WTC11 (cell line): ENCODE measurements at regions of chr4 and their contacts with region 1.

Region 1: DNA sequence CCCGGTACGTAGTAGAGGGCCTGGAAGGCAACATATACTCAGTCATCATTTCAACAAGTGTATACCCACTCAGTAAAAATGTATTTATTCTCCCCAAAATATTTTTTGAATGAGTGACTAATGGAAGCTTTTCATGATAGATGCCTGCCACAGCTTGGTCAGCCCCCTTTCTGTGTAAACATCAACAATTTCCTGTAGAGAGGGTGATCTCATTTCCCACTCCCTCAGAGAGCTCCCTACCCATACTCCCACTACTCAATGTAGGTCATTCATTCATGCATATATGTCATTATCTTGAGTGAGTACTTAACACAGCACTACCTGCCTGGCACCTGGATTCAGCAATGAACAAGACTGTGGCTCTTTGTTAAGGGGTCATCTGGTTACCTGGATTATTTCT is 81.9 kb downstream of the STK32B start:
- DNase-seq: no peak
- ATAC-seq: no peak
- H3K4me3 Mint-ChIP-seq: no peak overlapping the region
- H3K27ac Mint-ChIP-seq: no peak overlapping the region
- H3K4me1 Mint-ChIP-seq: peaks cover 28% of the 10 kb centered on the region
- H3K27me3 Mint-ChIP-seq: no peaks in the 10 kb centered on the region; the same call in 1 of the 2 replicates
- CTCF ChIP-seq: no peak

Region 2: DNA sequence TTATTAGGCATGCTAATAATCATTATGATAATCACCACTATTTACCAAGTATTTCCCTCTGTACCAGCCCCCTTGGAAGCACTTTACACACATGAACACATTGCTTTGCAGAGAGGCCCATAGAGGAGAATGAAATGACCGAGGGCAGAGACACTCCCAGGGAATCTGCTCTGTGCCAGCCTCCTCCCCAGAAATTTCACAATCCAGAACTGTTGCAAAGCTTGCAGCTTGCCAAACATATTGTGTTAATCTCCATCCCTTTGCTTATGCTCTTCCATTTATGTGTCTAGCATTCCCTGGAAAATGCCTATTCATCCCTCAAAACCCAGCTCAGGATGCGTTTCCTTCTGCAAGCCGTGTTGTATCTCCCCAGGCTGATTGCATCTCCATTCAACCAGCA is 151.8 kb before region 1 on chr4:
- CTCF ChIA-PET with region 1: no interaction called
- POLR2A ChIA-PET with region 1: no interaction called
- DNase-seq: no peak
- ATAC-seq: no peak
- H3K4me3 Mint-ChIP-seq: no peak overlapping the region
- H3K27ac Mint-ChIP-seq: no peak overlapping the region
- H3K4me1 Mint-ChIP-seq: no peaks in the 10 kb centered on the region
- H3K27me3 Mint-ChIP-seq: peaks cover 16% of the 10 kb centered on the region
- CTCF ChIP-seq: no peak

Region 3: DNA sequence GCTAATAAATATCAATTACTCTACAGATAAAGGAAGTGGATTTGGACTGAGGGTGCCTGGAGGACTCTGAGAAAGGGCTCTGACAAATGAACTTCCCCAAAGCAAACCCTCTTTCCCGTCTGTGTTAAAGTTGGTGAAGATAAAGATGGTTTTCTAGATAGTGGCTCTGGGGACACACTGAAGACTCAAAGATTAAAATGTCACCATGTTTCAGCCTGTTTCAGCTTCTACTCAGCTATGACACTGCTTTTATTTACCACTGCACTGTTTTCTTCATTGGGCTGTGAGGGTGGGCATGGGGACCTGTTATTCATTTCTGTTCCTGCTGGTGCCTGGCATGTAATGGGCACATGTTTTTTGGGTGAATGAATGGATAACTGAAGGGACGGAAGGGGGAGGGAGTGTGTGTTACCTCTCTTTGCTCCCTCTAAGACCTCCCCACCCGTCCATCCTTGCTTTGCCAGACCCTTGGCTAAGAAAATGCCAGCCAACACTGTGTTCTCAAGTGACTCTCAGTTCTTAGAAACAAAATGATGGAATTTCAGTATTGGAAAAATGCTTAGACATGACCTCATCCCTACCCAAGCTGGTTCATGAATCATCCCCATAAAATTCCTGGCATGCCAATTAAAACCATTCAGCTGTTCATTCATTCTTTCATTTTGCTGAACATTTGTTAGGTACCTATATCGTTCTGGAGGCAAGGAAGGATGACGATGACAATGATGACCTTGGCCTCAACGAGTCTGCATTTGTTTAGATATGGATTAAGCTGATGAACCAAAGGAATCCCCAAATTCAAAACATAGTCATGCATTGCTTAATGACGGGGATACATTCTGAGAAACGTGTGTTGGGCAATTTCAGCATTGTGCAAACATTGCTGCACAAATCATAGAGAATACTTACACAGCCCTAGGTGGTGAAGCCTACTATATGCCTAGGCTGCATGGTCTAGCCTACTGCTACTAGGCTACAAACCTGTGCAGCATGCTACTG is 95.3 kb before region 1 on chr4:
- CTCF ChIA-PET with region 1: no interaction called
- POLR2A ChIA-PET with region 1: no interaction called
- DNase-seq: no peak
- ATAC-seq: no peak
- H3K4me3 Mint-ChIP-seq: no peak overlapping the region
- H3K27ac Mint-ChIP-seq: no peak overlapping the region
- H3K4me1 Mint-ChIP-seq: peaks cover 16% of the 10 kb centered on the region
- H3K27me3 Mint-ChIP-seq: peaks cover 5% of the 10 kb centered on the region; the same call in 1 of the 2 replicates
- CTCF ChIP-seq: no peak

Region 4: GRCh38 chr4:5050520-5051277 is 82.5 kb before region 1 on chr4:
- CTCF ChIA-PET with region 1: interaction called, 10 read pairs
- POLR2A ChIA-PET with region 1: no interaction called
- DNase-seq: peak; percentile 81
- ATAC-seq: peak; percentile 79
- H3K4me3 Mint-ChIP-seq: peak overlapping the region; percentile 87
- H3K27ac Mint-ChIP-seq: no peak overlapping the region
- H3K4me1 Mint-ChIP-seq: peaks cover 8% of the 10 kb centered on the region; the same call in 1 of the 2 replicates
- H3K27me3 Mint-ChIP-seq: peaks cover 70% of the 10 kb centered on the region
- CTCF ChIP-seq: peak; percentile 66

Region 5: DNA sequence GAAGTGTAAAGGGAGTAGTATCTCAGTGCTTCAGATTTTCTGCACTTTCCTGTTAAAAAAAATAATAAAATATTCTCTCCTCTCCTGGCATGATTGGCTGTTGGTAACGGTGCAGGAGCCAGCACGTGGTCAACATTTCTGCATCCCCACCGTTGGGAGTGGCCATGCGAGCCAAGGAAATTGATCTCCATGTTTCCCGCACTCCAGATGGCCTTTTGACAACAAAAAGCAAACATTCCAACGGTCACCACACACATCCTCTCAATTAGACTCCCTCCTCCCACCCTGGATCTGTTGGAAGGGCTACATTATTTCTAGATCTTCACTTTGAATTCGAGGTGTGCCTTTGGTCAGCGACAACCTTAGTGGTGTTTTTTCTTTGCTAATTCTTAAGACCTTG is 36.9 kb before region 1 on chr4:
- CTCF ChIA-PET with region 1: no interaction called
- POLR2A ChIA-PET with region 1: no interaction called
- DNase-seq: no peak
- ATAC-seq: no peak
- H3K4me3 Mint-ChIP-seq: no peak overlapping the region
- H3K27ac Mint-ChIP-seq: no peak overlapping the region
- H3K4me1 Mint-ChIP-seq: peaks cover 6% of the 10 kb centered on the region
- H3K27me3 Mint-ChIP-seq: peaks cover 12% of the 10 kb centered on the region
- CTCF ChIP-seq: no peak